Panc1 (cell line): ENCODE measurements at regions of chr12 and their contacts with region 1.

Region 1: DNA sequence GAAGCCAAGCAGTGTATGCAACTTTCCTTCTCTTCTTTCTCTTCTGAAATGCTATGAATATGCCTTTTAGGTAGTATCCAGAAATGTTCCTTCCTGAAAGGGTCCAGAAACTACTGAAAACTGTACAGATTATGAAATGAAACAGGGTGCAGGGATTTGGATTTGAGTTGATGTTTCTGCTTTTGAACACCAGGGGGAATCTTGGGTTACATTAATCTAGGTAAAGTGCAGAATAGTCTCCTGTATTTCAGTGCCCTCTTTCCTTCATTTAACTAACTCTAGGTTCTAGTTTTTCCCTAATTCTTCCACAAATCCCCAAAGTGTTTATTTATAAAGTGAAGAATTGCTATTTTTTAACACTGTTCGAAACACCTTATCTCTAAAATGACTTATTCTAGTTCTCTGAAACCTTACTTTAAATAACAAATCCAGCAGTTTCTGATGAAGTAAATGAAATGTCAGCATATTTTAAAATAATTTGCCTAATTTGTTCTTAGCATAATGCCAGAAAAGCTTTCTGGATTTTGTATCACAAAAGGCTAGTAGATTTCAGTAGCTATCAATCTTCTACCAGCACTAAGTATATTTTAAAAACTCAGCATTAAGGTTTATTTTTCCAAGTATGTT is 111.9 kb downstream of the LRRK2 start:
- DNase-seq: no peak
- ATAC-seq: no peak
- H3K4me3 ChIP-seq: no peak overlapping the region
- H3K27ac ChIP-seq: no peak overlapping the region
- H3K4me1 ChIP-seq: no peaks in the 10 kb centered on the region
- H3K27me3 ChIP-seq: no peaks in the 10 kb centered on the region
- CTCF ChIP-seq: peak; percentile 48; the same call in 1 of the 2 replicates

Region 2: GRCh38 chr12:40117818-40118217 is 218.9 kb before region 1 on chr12:
- CTCF ChIA-PET with region 1: no interaction called
- POLR2A ChIA-PET with region 1: no interaction called
- in situ Hi-C with region 1: no loop called
- intact Hi-C with region 1: no loop called
- DNase-seq: no peak
- ATAC-seq: no peak
- H3K4me3 ChIP-seq: no peak overlapping the region
- H3K27ac ChIP-seq: no peak overlapping the region
- H3K4me1 ChIP-seq: no peaks in the 10 kb centered on the region
- H3K27me3 ChIP-seq: no peaks in the 10 kb centered on the region; the same call in 1 of the 2 replicates
- CTCF ChIP-seq: no peak

Region 3: DNA sequence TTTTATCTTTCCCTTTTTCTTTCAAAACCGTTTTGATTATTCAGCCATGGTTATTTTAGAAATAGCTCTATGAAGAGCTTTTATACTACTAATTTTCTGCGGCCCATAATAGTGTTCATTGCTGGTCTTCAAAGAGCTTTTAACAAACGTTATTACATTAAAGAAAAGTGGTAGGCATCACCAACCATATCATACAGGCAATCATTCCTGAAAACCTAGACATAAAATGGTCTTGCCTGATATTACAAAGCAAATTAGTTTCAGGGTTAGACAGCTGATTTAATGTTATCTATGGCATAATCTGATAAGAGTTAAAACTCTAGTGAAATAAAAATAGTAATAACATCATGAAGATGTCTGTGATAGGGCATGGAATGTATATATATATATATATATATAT is 265.9 kb after region 1 on chr12:
- CTCF ChIA-PET with region 1: no interaction called
- POLR2A ChIA-PET with region 1: no interaction called
- in situ Hi-C with region 1: no loop called
- intact Hi-C with region 1: loop called (anchors 10 kb)
- DNase-seq: no peak
- ATAC-seq: no peak
- H3K4me3 ChIP-seq: no peak overlapping the region
- H3K27ac ChIP-seq: no peak overlapping the region
- H3K4me1 ChIP-seq: no peaks in the 10 kb centered on the region
- H3K27me3 ChIP-seq: no peaks in the 10 kb centered on the region
- CTCF ChIP-seq: no peak